K562 (cell line): ENCODE measurements at regions of chr17 and their contacts with region 1.

Region 1: GRCh38 chr17:63406689-63407330 is 39.3 kb downstream of the CYB561 start:
- DNase-seq: peak; percentile 70 to 93 (median 78)
- ATAC-seq: peak; percentile 98
- H3K4me3 ChIP-seq: no peak overlapping the region
- H3K27ac ChIP-seq: no peak overlapping the region
- H3K4me1 ChIP-seq: peaks cover 3 to 4% of the 10 kb centered on the region in 2 experiments; a peak in 3 of 5 replicates
- H3K27me3 ChIP-seq: no peaks in the 10 kb centered on the region
- CTCF ChIP-seq: peak; percentile 87 to 95 (median 89)
- EP300 ChIP-seq: no peak
- POLR2A ChIP-seq: no peak
- RAD21 ChIP-seq: peak; percentile 83 to 93

Region 2: DNA sequence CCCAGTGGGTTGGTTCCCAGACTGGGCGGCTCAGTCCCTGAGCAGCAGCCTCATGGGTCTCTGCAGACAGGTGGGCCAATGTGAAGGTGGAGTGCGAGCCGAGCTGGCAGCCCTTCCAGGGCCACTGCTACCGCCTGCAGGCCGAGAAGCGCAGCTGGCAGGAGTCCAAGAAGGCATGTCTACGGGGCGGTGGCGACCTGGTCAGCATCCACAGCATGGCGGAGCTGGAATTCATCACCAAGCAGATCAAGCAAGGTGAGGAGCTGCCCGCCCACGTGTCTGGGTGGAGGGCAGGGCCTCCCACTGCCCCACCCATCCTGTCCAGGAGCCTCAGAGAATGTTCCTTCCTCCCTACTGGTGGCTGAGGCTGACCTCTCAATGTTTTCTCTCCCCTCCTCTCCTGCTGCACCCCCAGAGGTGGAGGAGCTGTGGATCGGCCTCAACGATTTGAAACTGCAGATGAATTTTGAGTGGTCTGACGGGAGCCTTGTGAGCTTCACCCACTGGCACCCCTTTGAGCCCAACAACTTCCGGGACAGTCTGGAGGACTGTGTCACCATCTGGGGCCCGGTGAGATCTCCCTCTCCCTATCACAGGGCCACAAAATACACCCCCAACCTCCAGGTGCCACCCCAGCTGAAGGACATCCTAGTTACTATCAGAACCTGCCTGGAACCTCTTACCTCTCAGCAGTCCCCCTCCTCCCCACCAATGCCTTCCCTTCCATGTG is 735.1 kb before region 1 on chr17:
- CTCF ChIA-PET with region 1: no interaction called
- POLR2A ChIA-PET with region 1: no interaction called
- in situ Hi-C with region 1: loop called (anchors 25 kb)
- intact Hi-C with region 1: loop called (anchors 10 kb)
- DNase-seq: peak; percentile 57 to 81 (median 72)
- ATAC-seq: peak; percentile 59
- H3K4me3 ChIP-seq: no peak overlapping the region
- H3K27ac ChIP-seq: no peak overlapping the region
- H3K4me1 ChIP-seq: peaks cover 8 to 41% of the 10 kb centered on the region in 2 experiments; a peak in 4 of 5 replicates
- H3K27me3 ChIP-seq: no peaks in the 10 kb centered on the region
- CTCF ChIP-seq: peak in 2 of 3 experiments; percentile 39 to 46; a peak in 3 of 6 replicates
- EP300 ChIP-seq: no peak
- POLR2A ChIP-seq: no peak
- RAD21 ChIP-seq: peak in 1 of 2 experiments; percentile 50; a peak in 2 of 4 replicates

Region 3: GRCh38 chr17:62703775-62704378 is 702.9 kb before region 1 on chr17:
- CTCF ChIA-PET with region 1: interaction called, 4 read pairs
- POLR2A ChIA-PET with region 1: no interaction called
- in situ Hi-C with region 1: loop called (anchors 25 kb)
- intact Hi-C with region 1: loop called (anchors 5 kb)
- DNase-seq: peak; percentile 72 to 84 (median 78)
- ATAC-seq: peak; percentile 96
- H3K4me3 ChIP-seq: peak overlapping the region; percentile 58
- H3K27ac ChIP-seq: peak overlapping the region; percentile 36; the same call in 1 of the 3 replicates
- H3K4me1 ChIP-seq: peaks cover 4 to 21% of the 10 kb centered on the region in 2 experiments; a peak in 4 of 5 replicates
- H3K27me3 ChIP-seq: peaks cover 8 to 29% of the 10 kb centered on the region in 2 experiments; a peak in 3 of 5 replicates
- CTCF ChIP-seq: peak; percentile 74 to 87 (median 84)
- EP300 ChIP-seq: no peak
- POLR2A ChIP-seq: no peak
- RAD21 ChIP-seq: peak; percentile 92 to 94

Region 4: DNA sequence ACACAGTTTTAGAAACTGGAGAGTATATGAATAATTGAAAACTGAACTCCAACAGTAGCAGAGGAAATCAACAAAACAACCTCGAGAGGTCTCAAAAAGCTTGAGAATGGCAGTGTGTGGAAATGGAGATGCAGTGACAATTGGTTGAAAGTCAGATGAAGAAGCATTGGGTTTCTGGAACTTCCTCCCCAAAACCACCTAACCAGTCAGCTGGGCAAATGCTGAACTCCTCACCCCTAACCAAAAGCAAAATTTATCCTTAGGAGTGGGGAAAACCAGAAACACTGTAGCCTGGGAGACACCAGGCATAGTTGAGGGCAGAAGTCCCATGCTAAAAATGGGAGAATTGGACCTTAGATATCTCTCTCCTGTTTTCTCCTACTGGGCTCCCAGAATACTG is 330.8 kb before region 1 on chr17:
- CTCF ChIA-PET with region 1: interaction called, 6 read pairs
- POLR2A ChIA-PET with region 1: no interaction called
- in situ Hi-C with region 1: loop called (anchors 10 kb)
- intact Hi-C with region 1: no loop called
- DNase-seq: no peak
- ATAC-seq: no peak
- H3K4me3 ChIP-seq: no peak overlapping the region
- H3K27ac ChIP-seq: no peak overlapping the region
- H3K4me1 ChIP-seq: no peaks in the 10 kb centered on the region
- H3K27me3 ChIP-seq: no peaks in the 10 kb centered on the region
- CTCF ChIP-seq: no peak
- EP300 ChIP-seq: no peak
- POLR2A ChIP-seq: no peak
- RAD21 ChIP-seq: no peak

Region 5: GRCh38 chr17:63113183-63113582 is 293.6 kb before region 1 on chr17:
- CTCF ChIA-PET with region 1: interaction called, 15 read pairs
- POLR2A ChIA-PET with region 1: no interaction called
- in situ Hi-C with region 1: no loop called
- intact Hi-C with region 1: loop called (anchors 10 kb)
- DNase-seq: peak; percentile 7 to 20 (median 12)
- ATAC-seq: peak; percentile 40; the same call in 1 of the 3 replicates
- H3K4me3 ChIP-seq: no peak overlapping the region
- H3K27ac ChIP-seq: no peak overlapping the region
- H3K4me1 ChIP-seq: no peaks in the 10 kb centered on the region
- H3K27me3 ChIP-seq: no peaks in the 10 kb centered on the region
- CTCF ChIP-seq: peak in 2 of 3 experiments; percentile 29 to 43; a peak in 3 of 6 replicates
- EP300 ChIP-seq: no peak
- POLR2A ChIP-seq: no peak
- RAD21 ChIP-seq: peak in 1 of 2 experiments; percentile 27; a peak in 1 of 4 replicates

Region 6: DNA sequence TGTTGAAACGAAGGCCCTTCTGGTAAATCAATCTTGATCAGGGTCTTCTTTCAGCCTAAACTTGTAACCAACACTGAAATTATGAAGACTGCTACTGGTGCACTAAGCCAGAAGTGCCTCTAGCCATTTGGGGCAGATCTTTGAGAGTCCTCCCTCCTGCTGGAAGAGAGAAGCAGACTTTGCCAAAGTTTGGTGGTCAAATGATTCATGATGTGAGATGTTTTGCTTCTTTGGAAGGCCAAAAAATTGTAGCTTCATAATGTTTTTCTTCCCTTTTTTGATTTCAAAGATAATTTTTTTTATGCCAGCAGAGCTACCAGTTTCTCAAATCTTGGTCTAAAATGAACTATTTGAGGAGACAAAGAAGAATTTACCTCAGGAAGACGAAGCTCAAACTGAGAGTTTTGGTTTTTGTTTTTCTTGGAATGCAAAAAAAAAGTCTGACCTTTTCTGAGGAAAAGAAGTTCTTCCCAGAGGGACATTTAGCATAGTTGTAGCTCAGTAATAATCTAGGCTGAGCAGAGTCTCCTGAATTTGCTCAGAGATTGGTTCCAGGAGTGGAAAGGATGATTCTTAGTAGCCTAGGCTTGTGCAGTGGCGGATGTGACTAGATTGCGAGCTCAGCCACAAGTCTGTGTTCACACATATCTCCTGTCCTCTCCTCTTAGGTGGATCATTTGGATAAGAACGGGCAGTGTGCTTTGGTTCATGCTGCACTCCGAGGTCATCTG is 11.6 kb before region 1 on chr17:
- CTCF ChIA-PET with region 1: no interaction called
- POLR2A ChIA-PET with region 1: no interaction called
- in situ Hi-C with region 1: no loop called
- intact Hi-C with region 1: no loop called
- DNase-seq: no peak
- ATAC-seq: no peak
- H3K4me3 ChIP-seq: no peak overlapping the region
- H3K27ac ChIP-seq: no peak overlapping the region
- H3K4me1 ChIP-seq: no peaks in the 10 kb centered on the region; a peak in 1 of 5 replicates
- H3K27me3 ChIP-seq: no peaks in the 10 kb centered on the region
- CTCF ChIP-seq: no peak
- EP300 ChIP-seq: no peak
- POLR2A ChIP-seq: no peak
- RAD21 ChIP-seq: no peak